Posterior vena cava (tissue), 2 donors: ENCODE measurements at regions of chr7 and their contacts with region 1.

Region 1: GRCh38 chr7:106176414-106177299 is 64.5 kb upstream of the SYPL1 start:
- DNase-seq: peak; percentile 95

Region 2: DNA sequence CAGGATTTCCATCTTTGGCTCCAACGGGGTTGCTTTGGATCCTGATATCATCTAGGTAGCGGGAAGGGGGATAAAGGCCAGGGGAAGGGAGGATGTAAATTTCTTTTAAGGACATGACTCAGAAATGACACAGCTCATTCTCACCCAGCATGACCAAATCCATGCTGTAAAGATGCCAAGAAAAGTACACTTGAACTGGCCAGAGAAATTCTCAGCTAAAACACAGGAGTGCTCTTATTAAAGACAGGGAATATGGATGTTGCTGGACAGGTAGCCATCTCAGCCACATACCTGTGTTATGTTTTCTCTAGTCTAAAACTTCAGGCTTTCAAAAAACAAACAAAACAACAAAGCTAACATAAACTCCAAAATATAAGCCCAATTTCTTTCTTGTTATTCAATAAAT is 39.9 kb after region 1 on chr7:
- intact Hi-C with region 1: no loop called
- DNase-seq: no peak

Region 3: DNA sequence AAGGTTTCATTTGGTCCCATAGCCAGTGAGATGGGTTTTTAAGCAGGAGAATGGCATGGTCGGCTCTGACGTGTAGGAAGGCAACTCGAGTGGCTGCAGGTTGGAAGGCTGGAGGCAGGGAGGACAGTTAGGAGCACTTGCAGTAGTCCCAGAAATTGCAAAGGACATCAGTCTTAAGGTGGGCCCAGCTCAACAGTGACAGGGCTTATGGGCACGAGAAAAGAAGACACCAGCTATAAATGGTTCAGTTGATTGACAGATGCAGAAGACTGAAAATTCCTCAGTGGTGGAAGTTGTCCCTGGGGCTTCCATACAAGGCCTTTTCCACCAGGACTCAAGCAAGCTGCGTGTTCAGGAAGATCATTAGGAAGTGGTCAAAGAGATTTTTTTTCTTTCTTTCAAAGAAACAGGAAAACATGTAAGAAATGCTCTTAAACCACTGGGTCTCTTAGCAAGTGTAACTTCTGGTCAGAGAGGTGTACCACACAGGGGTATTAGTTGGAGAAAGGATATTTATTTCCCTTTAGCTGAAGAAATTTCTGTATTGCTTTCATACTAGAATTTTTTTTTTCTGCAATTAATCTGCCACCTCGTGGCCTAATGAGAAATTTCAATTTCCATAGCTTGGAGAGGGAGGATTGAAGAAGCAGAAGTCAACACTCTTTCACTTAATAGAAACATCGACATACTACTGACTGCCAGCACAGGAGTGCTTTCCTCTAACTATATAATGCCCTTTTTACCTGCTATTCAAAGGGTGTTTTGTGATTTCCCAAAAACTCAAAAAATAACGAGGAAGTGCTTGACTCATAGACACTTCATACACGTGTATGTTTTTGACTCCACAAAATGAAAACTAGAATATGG is 285.6 kb after region 1 on chr7:
- intact Hi-C with region 1: loop called (anchors 5 kb)
- DNase-seq: no peak

Region 4: GRCh38 chr7:106542550-106543220 is 366.0 kb after region 1 on chr7:
- intact Hi-C with region 1: loop called in 1 of 2 experiments (anchors 5 kb)
- DNase-seq: no peak

Region 5: DNA sequence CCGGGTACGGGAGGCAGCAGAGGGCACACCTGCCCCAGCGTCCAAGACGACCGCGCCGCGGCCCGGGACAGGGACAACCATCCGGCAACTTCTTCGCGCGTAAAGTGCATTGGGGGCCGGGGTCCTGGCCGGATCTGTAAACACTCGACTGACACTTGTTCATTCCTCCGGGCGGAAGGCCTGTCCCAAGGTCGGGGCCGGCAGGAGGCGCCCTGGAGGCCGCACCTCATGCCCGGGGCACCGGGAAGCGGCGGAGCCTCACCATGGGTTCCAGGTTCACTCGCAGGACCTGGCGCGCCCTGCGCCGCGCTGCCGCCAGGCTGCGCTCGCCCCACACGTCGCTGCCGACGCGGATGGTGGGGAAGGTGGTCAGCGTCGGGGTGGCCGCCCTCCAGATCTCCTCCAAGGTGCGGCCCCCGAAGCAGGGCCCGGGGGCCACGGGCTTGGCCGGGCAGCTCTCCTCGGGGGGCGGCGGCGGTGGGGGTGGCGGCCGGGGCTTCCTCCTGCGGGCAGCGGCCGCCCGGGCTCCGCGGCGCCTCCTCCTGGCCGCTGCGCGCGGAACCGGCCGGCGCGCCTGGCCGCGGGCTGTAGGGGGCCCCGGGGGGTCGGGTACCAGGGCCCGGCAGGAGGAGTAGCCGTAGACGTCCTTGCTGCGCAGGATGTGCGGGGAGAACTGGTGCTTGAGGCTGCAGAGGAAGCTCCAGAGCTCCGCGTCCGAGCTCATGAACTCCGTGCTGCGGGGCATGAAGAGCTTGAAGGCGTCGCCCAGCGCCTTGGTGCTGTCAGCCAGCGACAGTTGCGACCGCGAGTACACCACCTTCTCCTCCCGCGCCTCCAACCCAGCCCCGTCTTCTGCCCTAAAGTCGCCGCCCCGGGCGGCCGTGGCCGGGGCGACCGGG is 483.6 kb after region 1 on chr7:
- intact Hi-C with region 1: loop called in 1 of 2 experiments (anchors 10 kb)
- DNase-seq: peak; percentile 94

Region 6: GRCh38 chr7:106736508-106737201 is 560.0 kb after region 1 on chr7:
- intact Hi-C with region 1: loop called (anchors 10 kb)
- DNase-seq: no peak